ENCODE measurements at regions of chr2 and their contacts with region 1.

Region 1: GRCh38 chr2:235045336-235045972 is 93.6 kb downstream of the SH3BP4 start:
- DNase-seq: peak; percentile 55

Region 2: DNA sequence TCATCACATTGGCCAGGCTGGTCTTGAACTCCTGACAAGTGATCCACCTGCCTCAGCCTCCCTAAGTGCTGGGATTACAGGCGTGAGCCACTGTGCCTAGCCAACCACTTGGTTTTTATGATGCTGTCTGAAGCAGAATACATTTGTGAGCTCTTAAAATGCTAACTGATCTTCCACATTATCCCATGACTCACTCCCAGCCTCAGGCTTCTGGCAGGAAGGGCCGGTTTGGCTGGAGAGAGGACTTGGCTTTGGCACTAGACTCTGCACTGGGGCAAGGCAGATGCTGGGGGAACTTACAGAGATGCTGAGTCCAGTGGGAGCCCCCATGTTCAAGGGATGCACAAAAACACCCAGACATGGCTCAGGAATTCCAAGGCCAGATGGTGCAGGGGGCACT is 134.2 kb before region 1 on chr2:
- intact Hi-C with region 1: no loop called
- DNase-seq: no peak

Region 3: GRCh38 chr2:234963773-234964615 is 81.5 kb before region 1 on chr2:
- intact Hi-C with region 1: loop called (anchors 5 kb)
- DNase-seq: peak; percentile 35

Measured in cardiac septum (tissue), 1 donor.